ENCODE measurements at regions of chr1 and their contacts with region 1.

Region 1: DNA sequence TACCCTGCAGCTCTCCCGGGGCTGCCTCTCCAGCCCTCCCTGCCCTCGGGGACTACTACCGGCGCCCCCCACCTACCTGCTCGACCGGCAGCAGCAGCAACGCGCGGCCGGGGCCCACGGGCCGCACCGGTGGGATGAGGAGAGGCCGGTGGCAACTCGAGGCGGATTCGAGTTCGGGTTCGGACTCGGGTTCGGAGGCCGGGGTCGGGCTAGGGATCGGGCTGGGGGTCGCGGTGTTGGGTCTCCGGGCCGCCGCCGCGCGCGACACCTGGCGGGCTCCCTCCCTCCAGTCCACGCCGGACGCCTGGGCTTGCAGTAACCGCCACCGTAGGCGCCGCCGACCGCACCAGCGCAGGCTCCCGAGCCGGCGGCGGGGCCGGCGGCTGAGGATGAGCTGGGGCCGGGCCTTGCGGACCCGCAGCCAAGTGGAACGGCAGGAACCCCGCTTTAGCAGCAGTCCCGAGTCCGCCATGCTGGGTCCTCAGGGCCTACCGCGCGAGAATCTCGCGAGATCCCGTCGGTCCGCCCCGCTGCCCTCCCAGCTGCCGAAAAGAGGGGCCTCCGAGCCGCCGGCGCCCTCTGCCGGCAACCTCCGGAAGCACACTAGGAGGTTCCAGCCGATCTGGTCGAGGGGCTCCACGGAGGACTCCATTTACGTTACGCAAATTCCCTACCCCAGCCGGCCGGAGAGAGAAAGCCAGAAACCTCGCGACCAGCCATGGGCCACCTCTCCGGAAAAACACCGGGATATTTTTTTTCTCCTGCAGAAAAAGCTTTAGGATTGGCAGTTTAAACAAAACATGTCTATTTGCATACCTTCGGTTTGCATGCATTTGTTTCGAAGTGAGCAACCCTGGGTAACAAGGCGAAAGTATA is at the start of gene NOL9:
- DNase-seq: peak; percentile 97
- H3K4me3 Mint-ChIP-seq: peak within 1 kb of the TSS; percentile 76
- H3K27ac Mint-ChIP-seq: peak within 1 kb of the TSS; percentile 18
- H3K4me1 Mint-ChIP-seq: peaks cover 13% of the 10 kb centered on the region
- H3K27me3 Mint-ChIP-seq: no peaks in the 10 kb centered on the region
- total RNA-seq, gene NOL9: 29.8 to 32.5 TPM

Region 2: GRCh38 chr1:6489799-6490180 is 64.5 kb before region 1 on chr1:
- CTCF ChIA-PET with region 1: interaction called, 5 read pairs
- POLR2A ChIA-PET with region 1: interaction called, 6 read pairs
- intact Hi-C with region 1: loop called (anchors 5 kb)
- DNase-seq: peak; percentile 87
- H3K4me3 Mint-ChIP-seq: peak overlapping the region; percentile 74
- H3K27ac Mint-ChIP-seq: peak overlapping the region; percentile 42
- H3K4me1 Mint-ChIP-seq: peaks cover 21% of the 10 kb centered on the region
- H3K27me3 Mint-ChIP-seq: peaks cover 8% of the 10 kb centered on the region

Region 3: DNA sequence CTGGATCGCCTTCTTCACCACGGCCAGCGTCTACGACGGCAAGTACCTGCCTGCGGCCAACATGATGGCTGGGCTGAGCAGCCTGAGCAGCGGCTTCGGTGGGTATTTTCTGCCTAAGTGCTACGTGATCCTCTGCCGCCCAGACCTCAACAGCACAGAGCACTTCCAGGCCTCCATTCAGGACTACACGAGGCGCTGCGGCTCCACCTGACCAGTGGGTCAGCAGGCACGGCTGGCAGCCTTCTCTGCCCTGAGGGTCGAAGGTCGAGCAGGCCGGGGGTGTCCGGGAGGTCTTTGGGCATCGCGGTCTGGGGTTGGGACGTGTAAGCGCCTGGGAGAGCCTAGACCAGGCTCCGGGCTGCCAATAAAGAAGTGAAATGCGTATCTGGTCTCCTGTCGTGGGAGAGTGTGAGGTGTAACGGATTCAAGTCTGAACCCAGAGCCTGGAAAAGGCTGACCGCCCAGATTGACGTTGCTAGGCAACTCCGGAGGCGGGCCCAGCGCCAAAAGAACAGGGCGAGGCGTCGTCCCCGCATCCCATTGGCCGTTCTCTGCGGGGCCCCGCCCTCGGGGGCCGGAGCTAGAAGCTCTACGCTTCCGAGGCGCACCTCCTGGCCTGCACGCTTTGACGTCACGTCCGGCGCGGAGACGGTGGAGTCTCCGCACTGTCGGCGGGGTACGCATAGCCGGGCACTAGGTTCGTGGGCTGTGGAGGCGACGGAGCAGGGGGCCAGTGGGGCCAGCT is 25.3 kb after region 1 on chr1 and contains the start of gene ZBTB48:
- CTCF ChIA-PET with region 1: interaction called, 26 read pairs
- POLR2A ChIA-PET with region 1: interaction called, 3 read pairs
- intact Hi-C with region 1: loop called (anchors 2 kb)
- DNase-seq: peak; percentile 98
- H3K4me3 Mint-ChIP-seq: peak within 1 kb of the TSS; percentile 94
- H3K27ac Mint-ChIP-seq: peak within 1 kb of the TSS; percentile 87
- H3K4me1 Mint-ChIP-seq: peaks cover 35% of the 10 kb centered on the region
- H3K27me3 Mint-ChIP-seq: no peaks in the 10 kb centered on the region
- total RNA-seq, gene ZBTB48: 24.6 to 28.1 TPM

Region 4: DNA sequence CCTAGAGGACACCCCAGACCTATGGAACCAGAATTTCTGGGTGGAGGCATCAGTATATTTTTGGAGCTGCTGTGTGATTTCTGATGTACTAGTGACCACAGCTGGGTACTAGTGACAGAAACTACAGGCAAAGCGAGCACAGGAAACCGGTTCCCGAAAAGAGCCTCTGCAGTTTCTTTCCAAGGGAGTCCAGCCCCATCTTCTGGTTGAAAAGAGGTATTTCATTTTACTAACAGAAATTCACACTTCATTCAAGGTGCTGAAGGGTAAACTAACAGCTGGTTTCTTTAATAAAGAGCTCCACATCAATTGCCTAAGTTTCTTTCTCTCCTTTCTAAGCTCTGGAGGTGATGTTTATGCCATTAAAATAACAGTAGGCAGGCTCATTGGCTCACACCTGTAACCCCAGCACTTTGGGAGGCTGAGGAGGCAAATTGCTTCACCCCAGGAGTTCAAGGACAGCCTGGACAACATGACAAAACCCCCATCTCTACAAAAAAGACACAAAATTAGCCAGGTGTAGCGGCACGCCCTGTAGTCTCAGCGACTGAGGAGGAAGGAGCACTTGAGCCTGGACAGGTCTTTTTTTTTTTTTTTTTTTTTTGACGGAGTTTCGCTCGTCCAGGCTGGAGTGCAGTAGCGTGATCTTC is 92.4 kb after region 1 on chr1:
- CTCF ChIA-PET with region 1: interaction called, 20 read pairs
- POLR2A ChIA-PET with region 1: no interaction called
- intact Hi-C with region 1: no loop called
- DNase-seq: peak; percentile 34
- H3K4me3 Mint-ChIP-seq: no peak overlapping the region
- H3K27ac Mint-ChIP-seq: no peak overlapping the region
- H3K4me1 Mint-ChIP-seq: no peaks in the 10 kb centered on the region
- H3K27me3 Mint-ChIP-seq: no peaks in the 10 kb centered on the region